AG04449 (cell line): ENCODE measurements at regions of chr5 and their contacts with region 1.

Region 1: GRCh38 chr5:115544436-115545350 is at the start of gene FEM1C:
- DNase-seq: peak; percentile 78
- H3K4me3 ChIP-seq: peak within 1 kb of the TSS; percentile 78
- CTCF ChIP-seq: no peak

Region 2: GRCh38 chr5:115360046-115360685 is 184.5 kb before region 1 on chr5:
- CTCF ChIA-PET with region 1: no interaction called
- POLR2A ChIA-PET with region 1: no interaction called
- DNase-seq: no peak
- H3K4me3 ChIP-seq: no peak overlapping the region
- CTCF ChIP-seq: no peak

Region 3: DNA sequence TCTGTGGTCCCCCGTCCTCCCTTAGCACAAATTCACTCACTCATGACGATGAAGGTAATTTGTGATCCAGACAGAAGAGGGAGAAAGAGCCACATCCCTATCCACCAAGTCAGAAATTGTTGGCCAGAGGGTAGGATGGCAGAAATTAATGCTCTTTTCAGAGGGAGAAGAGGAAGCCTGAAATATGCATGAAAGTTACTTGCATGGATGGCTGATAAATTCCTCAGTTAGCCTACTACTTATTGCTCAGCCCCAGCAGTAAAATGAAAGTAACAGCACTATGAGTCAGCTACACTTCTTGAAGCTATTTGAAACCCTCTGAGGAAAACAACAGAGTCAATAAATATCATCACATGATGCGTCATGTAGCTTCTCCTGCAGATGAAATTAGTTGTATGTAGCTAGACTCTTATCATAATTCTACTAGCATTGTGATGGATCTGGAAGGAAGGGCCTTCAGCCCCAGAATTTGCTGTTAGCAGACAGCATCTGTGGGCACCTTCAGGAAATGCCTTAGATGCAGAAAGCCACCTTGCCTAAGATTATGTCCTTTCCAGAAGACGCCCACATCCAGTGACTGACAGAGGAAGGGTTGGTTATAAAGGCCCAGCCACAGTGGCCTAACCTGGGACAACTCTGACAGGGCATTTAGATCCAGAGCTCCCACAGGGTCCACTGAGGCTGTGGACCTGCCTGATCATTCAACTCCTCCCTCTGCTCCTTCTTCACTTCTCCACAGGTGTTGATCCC is 167.1 kb before region 1 on chr5:
- CTCF ChIA-PET with region 1: interaction called, 21 read pairs
- POLR2A ChIA-PET with region 1: interaction called, 5 read pairs
- DNase-seq: peak; percentile 93
- H3K4me3 ChIP-seq: peak overlapping the region; percentile 16
- CTCF ChIP-seq: peak; percentile 53

Region 4: DNA sequence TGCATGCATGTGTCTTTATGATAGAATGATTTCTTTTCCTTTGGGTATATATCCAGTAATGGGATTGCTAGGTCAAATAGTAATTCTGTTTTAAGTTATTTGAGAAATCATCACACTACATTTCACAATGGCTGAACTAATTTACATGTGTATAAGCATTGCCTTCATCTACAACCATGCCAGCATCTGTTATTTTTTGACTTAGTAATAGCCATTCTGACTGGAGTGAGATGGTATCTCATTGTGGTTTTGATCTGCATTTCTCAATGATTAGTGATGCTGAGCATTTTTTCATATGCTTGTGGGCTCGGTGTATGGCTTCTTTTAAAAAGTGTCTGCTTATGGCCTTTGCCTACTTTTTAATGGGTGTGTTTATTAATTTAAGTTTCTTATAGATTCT is 146.0 kb before region 1 on chr5:
- CTCF ChIA-PET with region 1: no interaction called
- POLR2A ChIA-PET with region 1: no interaction called
- DNase-seq: peak; percentile 91
- H3K4me3 ChIP-seq: no peak overlapping the region
- CTCF ChIP-seq: no peak

Region 5: GRCh38 chr5:115460472-115460871 is 84.2 kb before region 1 on chr5:
- CTCF ChIA-PET with region 1: no interaction called
- POLR2A ChIA-PET with region 1: interaction called, 10 read pairs
- DNase-seq: no peak
- H3K4me3 ChIP-seq: no peak overlapping the region
- CTCF ChIP-seq: no peak

Region 6: DNA sequence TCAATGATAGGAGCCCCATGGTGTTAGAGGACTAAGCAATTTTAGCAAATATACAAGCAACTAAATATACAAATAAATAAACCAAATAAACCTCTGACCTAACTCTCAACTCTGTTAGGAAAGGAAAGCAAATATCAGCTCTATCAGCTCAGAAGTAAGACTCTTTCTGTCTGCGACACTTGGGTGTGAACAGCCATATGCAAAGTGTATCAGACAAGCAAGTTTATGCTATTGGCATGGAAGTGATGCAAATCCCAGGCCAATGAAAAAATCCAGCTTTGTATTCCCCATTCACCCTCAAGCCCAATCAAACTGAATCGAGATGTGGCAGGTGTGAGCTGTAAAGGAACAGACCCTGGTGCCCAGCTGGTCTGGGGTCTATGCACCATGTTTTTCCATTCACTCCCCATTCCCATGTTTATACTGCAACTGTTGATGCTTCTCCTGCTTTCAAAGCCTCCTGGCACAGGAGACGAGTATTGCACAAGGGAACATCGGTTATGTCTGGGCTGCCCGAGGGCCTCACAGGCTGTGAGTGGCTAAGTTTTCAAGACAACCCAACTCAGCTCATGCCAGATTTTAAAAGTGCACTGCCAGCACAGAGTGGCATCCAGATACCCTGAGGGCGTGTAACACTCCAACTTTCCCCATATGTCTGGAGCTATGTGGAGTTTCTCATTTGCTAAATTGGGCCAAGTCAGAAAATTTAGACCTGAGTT is 73.2 kb before region 1 on chr5:
- CTCF ChIA-PET with region 1: no interaction called
- POLR2A ChIA-PET with region 1: no interaction called
- DNase-seq: no peak
- H3K4me3 ChIP-seq: no peak overlapping the region
- CTCF ChIP-seq: no peak

Region 7: DNA sequence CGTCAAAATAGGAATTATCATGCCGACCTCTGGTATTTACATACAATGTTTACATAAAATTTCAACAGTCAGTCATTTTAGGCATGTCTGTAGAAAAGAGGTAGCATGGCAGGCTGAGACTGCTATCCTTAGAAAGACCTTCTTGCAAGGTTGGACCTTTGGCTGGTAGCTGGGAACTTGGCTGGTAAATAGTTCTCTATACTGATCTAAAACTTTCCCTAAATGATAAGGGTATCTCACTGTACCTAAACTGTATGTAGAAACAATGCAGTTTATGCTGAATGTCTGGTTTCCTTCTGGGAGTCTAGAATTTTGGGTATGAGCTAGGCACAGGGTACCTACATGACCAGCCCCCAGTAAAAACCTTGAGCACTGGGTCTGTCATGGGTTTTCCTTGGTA is 18.1 kb before region 1 on chr5:
- CTCF ChIA-PET with region 1: interaction called, 15 read pairs
- POLR2A ChIA-PET with region 1: interaction called, 4 read pairs
- DNase-seq: no peak
- H3K4me3 ChIP-seq: no peak overlapping the region
- CTCF ChIP-seq: no peak